ENCODE measurements at regions of chr3 and their contacts with region 1.

Region 1: GRCh38 chr3:152183473-152183872 is 85.3 kb upstream of the MBNL1 start:
- DNase-seq: no peak
- H3K4me3 Mint-ChIP-seq: no peak overlapping the region
- H3K27ac Mint-ChIP-seq: peak overlapping the region; percentile 11
- H3K4me1 Mint-ChIP-seq: peaks cover 49% of the 10 kb centered on the region
- H3K27me3 Mint-ChIP-seq: peaks cover 7% of the 10 kb centered on the region

Region 2: DNA sequence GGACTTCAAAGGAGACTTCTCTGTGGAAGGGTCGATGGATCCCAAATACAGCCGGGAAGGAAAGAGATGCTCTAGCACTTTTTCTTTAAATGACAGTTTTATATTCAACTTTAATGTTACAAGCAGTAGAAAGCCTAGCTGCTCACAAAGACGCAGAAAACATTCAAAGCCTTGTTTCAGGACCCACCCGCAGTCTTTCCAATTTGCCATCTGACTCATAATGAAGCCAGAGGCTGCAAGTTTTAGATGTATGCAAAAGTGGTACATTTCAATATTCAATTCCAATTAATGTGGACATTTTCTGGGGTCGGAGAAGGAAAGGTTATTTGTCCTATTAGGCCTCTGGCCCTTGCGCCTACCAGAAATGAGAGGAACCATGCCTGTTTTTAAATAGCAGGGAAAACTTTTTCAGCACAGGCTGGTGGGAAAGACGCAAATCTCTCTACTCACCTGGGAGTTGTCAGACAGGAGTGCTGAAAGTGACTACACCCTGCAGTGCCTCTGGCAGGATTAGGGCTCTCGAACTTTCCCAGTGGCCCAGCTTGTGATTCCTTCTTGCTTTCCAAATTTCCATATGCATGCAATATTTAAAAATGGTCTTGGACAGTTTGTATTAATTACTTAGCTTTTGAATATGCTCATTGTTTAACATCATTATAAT is 32.1 kb before region 1 on chr3:
- intact Hi-C with region 1: loop called (anchors 5 kb)
- DNase-seq: no peak
- H3K4me3 Mint-ChIP-seq: no peak overlapping the region
- H3K27ac Mint-ChIP-seq: no peak overlapping the region
- H3K4me1 Mint-ChIP-seq: peaks cover 37% of the 10 kb centered on the region
- H3K27me3 Mint-ChIP-seq: peaks cover 1% of the 10 kb centered on the region

Region 3: DNA sequence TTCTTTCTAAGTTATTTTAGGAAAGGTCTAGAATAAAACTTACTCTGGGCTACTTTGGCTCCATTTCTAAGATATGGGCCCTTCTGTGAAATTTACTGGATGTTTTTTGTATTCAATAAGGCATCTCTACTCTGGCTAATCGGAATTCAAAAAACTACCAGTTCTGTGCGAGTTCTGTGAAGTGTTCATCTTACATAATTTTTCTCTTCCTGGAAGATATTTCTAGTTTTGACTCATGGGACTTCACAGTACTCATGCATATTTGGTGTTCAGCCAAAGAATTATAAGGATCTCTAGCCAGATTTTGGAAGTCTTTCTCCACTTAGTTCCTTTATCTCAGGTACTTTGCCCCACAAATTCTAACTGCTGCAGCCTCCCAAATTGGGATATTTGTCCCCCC is 38.9 kb after region 1 on chr3:
- intact Hi-C with region 1: no loop called
- DNase-seq: no peak
- H3K4me3 Mint-ChIP-seq: peak overlapping the region; percentile 38
- H3K27ac Mint-ChIP-seq: peak overlapping the region; percentile 81
- H3K4me1 Mint-ChIP-seq: peaks cover 74% of the 10 kb centered on the region
- H3K27me3 Mint-ChIP-seq: no peaks in the 10 kb centered on the region

Region 4: GRCh38 chr3:152756807-152757206 is 573.3 kb after region 1 on chr3:
- intact Hi-C with region 1: no loop called
- DNase-seq: no peak
- H3K4me3 Mint-ChIP-seq: no peak overlapping the region
- H3K27ac Mint-ChIP-seq: no peak overlapping the region
- H3K4me1 Mint-ChIP-seq: no peaks in the 10 kb centered on the region
- H3K27me3 Mint-ChIP-seq: no peaks in the 10 kb centered on the region

Measured in activated T-helper 1 cell treated with anti-CD3 and anti-CD28 coated beads, Interleukin-12 subunit alpha, Interleukin-12 subunit beta, Interleukin-2, Interleukin-4 antibody, amounts not matched to agents 30 ng/mL and 10 ng/mL and 1 ng/mL, durations not matched to agents 14 hours and 24 hours and 36 hours (primary cell).